Breast epithelium (tissue), 4 donors: ENCODE measurements at regions of chr6 and their contacts with region 1.

Region 1: DNA sequence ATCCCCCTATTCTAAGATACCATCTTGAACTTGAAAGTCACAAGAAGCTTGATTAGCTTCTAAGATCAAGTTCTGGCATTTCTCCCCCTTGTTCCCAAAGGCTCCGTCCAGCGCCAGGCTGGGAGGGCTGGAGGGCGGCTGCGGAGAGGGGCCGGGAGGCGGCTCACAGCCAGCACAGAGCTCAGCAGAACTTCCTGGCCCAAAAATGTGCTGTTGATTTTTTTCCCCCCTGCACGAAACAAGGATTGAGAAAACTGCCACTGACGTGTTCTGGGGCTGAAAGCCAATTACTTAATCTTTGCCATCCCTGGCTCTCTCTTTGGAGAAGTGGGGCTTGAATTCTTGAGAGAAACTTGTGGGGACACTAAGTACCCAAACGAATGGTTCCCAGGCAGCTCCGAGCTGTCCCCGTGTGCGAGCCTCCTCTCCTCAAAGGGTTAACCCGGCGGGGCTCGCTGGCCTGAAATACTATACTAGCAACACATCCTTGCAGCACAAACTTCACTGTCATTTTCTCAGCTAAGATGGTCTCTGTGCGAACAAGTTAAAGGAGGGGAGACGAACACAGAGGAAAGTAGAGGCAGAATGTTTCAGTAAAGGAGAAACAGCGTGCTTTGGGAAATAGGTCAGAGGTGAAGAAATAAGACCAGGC is 452 bp downstream of the TRAF3IP2 start:
- DNase-seq: peak; percentile 59 to 63
- H3K4me3 ChIP-seq: peak overlapping the region; percentile 55 to 76 (median 60)
- H3K27ac ChIP-seq: peak overlapping the region; percentile 97 to 99
- H3K4me1 ChIP-seq: peaks cover 15 to 25% of the 10 kb centered on the region in 2 donors
- H3K27me3 ChIP-seq: no peaks in the 10 kb centered on the region
- CTCF ChIP-seq: no peak
- POLR2A ChIP-seq: no peak

Region 2: GRCh38 chr6:111483736-111484632 is 121.2 kb before region 1 on chr6:
- intact Hi-C with region 1: loop called (anchors 10 kb)
- DNase-seq: peak; percentile 84 to 93
- H3K4me3 ChIP-seq: peak overlapping the region; percentile 89 to 100 (median 99)
- H3K27ac ChIP-seq: peak overlapping the region; percentile 98 to 100
- H3K4me1 ChIP-seq: no peaks in the 10 kb centered on the region
- H3K27me3 ChIP-seq: no peaks in the 10 kb centered on the region
- CTCF ChIP-seq: peak in 1 of 3 donors; percentile 19
- POLR2A ChIP-seq: peak; percentile 72